Naive thymus-derived CD4-positive, alpha-beta T cell (primary cell): ENCODE measurements at regions of chr12 and their contacts with region 1.

Region 1: DNA sequence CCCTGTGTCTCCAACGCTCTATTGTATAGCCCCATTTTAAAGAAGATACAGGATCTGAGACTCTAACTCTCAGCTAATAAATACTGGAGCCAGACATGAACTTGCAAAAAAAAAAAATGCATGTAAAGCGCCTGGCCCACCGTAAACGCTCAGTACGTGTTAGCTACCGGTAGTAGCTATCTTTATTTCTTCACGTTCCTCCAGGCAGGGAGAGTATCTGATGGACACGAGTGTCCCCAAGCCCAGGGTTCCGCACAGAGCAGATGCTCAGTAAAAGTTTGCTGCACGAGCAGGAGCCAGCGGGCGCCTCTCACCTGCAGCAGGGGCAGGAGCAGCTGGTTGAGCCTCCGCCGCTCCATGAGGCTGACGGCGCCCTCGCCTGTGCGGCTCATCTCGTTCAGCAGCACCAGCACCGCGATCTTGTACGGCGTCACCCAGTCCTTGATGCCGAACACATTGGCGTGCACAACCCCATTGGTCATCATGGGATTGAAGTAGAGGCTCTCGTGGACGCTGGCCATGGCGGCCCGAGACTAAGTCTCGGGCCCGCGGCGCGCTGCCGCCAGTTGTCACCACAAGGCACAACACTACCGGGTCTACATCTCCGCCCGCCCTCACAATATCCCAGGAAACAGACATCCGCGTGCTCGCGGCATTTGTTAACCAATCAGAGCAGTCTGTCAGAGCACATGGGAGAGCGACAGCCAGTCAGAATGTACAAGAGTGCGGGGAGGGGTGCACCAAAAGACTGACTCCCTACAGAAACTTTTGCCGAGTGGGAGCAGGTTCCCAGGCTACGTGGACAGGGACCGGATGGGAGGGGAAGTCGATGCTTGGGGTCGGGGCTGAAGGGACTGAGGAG is at the start of gene ANAPC5:
- DNase-seq: peak; percentile 61 to 93 (median 89)
- ATAC-seq: peak; percentile 99
- H3K4me3 ChIP-seq: peak within 1 kb of the TSS; percentile 99
- H3K4me3 Mint-ChIP-seq: peak within 1 kb of the TSS; percentile 88 to 100 (median 97)
- H3K27ac ChIP-seq: peak within 1 kb of the TSS; percentile 78
- H3K27ac Mint-ChIP-seq: peak within 1 kb of the TSS; percentile 90 to 100 (median 98)
- H3K4me1 ChIP-seq: peaks cover 6 to 7% of the 10 kb centered on the region in 2 donors
- H3K4me1 Mint-ChIP-seq: peaks cover 25 to 58% (median 42%) of the 10 kb centered on the region in 7 donors
- H3K27me3 ChIP-seq: no peaks in the 10 kb centered on the region
- H3K27me3 Mint-ChIP-seq: peaks cover 0 to 5% (median 0%) of the 10 kb centered on the region in 5 donors
- total RNA-seq, gene ANAPC5: 114 to 148 (median 141) TPM

Region 2: GRCh38 chr12:121334513-121335343 is 17.3 kb before region 1 on chr12:
- CTCF ChIA-PET with region 1: interaction called, 7 read pairs
- POLR2A ChIA-PET with region 1: interaction called, 8 read pairs
- intact Hi-C with region 1: loop called in 1 of 2 experiments (anchors 2 kb)
- DNase-seq: peak in 8 of 9 donors; percentile 15 to 57 (median 46)
- ATAC-seq: peak; percentile 92
- H3K4me3 ChIP-seq: no peak overlapping the region
- H3K4me3 Mint-ChIP-seq: no peak overlapping the region
- H3K27ac ChIP-seq: no peak overlapping the region
- H3K27ac Mint-ChIP-seq: peak overlapping the region in 2 of 9 donors; percentile 14 to 76
- H3K4me1 ChIP-seq: peaks cover 0 to 3% of the 10 kb centered on the region in 2 donors
- H3K4me1 Mint-ChIP-seq: peaks cover 0 to 7% (median 5%) of the 10 kb centered on the region in 7 donors
- H3K27me3 ChIP-seq: no peaks in the 10 kb centered on the region
- H3K27me3 Mint-ChIP-seq: no peaks in the 10 kb centered on the region

Region 3: GRCh38 chr12:121467115-121467793 is 115.2 kb after region 1 on chr12:
- CTCF ChIA-PET with region 1: no interaction called
- POLR2A ChIA-PET with region 1: interaction called, 6 read pairs
- intact Hi-C with region 1: loop called in 1 of 2 experiments (anchors 1 kb)
- DNase-seq: peak; percentile 79 to 93 (median 86)
- ATAC-seq: peak; percentile 92
- H3K4me3 ChIP-seq: peak overlapping the region; percentile 44
- H3K4me3 Mint-ChIP-seq: peak overlapping the region in 6 of 10 donors; percentile 45 to 90 (median 59)
- H3K27ac ChIP-seq: peak overlapping the region; percentile 73
- H3K27ac Mint-ChIP-seq: no peak overlapping the region
- H3K4me1 ChIP-seq: peaks cover 7 to 17% of the 10 kb centered on the region in 2 donors
- H3K4me1 Mint-ChIP-seq: peaks cover 18 to 34% (median 30%) of the 10 kb centered on the region in 7 donors
- H3K27me3 ChIP-seq: no peaks in the 10 kb centered on the region
- H3K27me3 Mint-ChIP-seq: peaks cover 0 to 3% (median 0%) of the 10 kb centered on the region in 5 donors